BJ (cell line): ENCODE measurements at regions of chr6 and their contacts with region 1.

Region 1: DNA sequence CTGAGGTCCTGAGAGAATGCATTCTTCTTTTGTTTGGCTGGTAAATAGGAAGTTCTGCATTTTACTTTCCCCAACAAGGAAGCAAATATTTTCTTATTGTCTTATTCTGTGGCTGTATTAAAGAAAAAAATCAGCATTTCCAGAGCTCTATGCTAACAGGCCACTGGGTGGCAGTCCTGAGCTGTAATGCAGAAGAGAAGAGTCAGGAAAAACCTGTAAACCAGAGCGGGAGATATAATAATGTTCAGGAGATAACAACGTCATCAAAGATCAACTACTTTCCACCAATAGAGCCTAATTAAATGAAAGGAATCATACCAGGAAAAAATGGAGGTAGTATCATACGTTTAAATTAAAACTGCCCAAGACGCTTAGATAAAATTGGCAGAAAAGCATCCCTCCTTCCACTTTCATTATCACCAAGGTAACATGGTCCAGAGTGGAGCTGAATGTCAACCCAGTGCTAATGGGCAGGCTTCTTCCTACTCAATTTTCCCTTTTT is 55.6 kb upstream of the CARMIL1 start:
- DNase-seq: no peak
- H3K4me3 ChIP-seq: peak overlapping the region; percentile 22
- H3K27me3 ChIP-seq: no peaks in the 10 kb centered on the region
- CTCF ChIP-seq: peak; percentile 83

Region 2: DNA sequence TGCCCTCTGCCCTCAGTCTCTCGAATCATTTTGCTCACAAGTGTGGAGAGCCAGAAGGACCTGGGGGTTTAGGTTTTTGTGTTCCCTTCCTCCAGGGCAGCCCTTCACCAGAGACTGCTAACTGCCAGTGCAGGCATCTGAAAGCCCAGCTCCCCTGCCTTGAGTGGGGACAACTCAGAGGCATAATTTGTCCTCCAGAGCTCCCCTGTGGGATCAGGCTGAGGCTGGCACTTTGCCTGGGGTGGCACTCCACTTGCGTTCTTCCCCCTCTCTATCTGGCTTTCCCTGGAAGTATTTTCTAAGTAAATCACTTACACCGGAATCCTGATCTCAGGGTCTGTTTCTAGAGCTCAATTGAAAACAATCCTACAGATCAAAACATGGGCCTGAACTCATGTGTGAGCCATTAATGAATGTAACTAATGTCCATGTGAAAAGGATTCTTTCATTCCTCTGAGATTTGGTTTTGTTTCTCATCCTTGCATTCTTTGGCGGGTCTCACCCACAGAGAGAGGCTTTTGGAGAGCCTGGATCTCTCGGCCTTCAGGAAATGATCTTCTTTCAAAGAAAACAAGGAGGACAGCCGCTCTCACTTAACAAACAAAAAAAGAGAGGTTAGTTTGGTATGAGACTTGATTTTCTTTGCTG is 162.1 kb before region 1 on chr6:
- CTCF ChIA-PET with region 1: no interaction called
- POLR2A ChIA-PET with region 1: no interaction called
- DNase-seq: peak; percentile 27
- H3K4me3 ChIP-seq: no peak overlapping the region
- H3K27me3 ChIP-seq: no peaks in the 10 kb centered on the region
- CTCF ChIP-seq: no peak

Region 3: DNA sequence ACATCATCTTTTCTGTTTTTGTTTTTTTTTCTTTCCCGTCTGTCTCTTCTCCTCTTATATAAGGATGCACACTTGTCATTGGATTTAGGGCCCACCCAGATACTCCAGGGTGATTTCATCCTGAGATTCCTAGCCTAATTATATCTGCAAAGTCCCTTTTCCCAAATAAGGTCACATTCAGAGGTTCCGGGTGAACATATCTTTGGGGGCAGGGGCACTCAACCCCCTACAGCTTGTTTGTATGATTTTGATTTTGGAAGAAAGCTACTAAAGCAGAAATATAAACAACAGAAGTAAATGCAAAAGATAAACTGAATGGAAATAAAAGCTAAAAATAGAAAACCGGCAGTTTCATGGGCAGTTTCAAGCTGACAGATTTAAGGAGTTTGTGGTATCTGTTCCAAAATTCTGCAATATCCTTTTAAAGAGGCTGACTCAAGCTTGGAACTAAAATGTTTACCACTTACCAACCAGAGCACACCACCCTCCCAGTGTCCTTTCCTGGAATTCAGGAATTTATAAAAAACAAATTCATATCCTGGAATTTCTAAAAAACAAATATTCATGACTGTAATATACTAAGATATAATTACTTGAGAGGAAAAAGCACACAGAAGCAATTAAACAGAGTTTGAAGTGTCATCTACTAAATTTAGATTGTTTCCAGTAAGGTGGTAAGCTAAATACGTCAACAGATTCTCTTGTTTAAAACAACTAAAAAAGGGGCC is 44.3 kb before region 1 on chr6:
- CTCF ChIA-PET with region 1: interaction called, 13 read pairs
- POLR2A ChIA-PET with region 1: no interaction called
- DNase-seq: peak; percentile 75
- H3K4me3 ChIP-seq: no peak overlapping the region
- H3K27me3 ChIP-seq: no peaks in the 10 kb centered on the region
- CTCF ChIP-seq: no peak

Region 4: DNA sequence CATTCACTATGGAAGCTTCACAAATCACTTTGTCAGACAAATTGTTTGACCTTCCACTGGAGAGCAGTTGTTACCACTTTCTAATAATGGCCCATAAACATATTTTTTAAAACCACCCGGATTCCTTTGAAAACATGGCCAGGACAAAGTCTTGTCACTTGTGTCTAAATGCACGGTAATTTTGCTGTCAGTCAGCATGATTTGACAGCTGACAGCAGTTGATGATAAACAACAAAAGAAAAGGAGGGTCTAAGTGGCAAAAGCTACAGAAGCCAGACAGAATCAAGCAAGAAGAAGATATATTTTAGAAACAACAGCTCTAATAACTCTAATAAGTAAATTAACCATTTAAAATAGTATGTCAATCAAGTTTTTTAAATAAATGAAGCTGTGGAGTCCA is 27.9 kb after region 1 on chr6:
- CTCF ChIA-PET with region 1: no interaction called
- POLR2A ChIA-PET with region 1: no interaction called
- DNase-seq: no peak
- H3K4me3 ChIP-seq: no peak overlapping the region
- H3K27me3 ChIP-seq: no peaks in the 10 kb centered on the region
- CTCF ChIP-seq: no peak

Region 5: DNA sequence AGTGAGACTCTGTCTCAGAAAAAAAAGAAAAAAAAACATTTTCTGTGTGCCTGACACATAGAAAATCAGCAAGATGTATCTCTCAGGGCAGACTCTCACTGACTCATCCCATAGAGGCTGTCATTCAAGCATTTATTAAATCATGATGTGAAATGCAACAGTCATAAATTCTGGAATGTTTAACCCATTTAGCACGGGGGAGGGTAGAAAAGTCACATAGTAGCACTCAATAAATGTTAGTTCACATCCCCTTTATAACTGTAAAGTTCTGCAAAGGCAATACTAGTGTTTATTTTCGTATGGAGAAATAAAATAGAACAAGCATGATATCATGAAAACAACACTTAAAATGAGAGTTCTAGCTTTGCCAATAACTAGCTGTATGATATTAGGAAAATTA is 40.1 kb after region 1 on chr6:
- CTCF ChIA-PET with region 1: interaction called, 21 read pairs
- POLR2A ChIA-PET with region 1: interaction called, 5 read pairs
- DNase-seq: peak; percentile 96
- H3K4me3 ChIP-seq: no peak overlapping the region
- H3K27me3 ChIP-seq: no peaks in the 10 kb centered on the region
- CTCF ChIP-seq: no peak

Region 6: DNA sequence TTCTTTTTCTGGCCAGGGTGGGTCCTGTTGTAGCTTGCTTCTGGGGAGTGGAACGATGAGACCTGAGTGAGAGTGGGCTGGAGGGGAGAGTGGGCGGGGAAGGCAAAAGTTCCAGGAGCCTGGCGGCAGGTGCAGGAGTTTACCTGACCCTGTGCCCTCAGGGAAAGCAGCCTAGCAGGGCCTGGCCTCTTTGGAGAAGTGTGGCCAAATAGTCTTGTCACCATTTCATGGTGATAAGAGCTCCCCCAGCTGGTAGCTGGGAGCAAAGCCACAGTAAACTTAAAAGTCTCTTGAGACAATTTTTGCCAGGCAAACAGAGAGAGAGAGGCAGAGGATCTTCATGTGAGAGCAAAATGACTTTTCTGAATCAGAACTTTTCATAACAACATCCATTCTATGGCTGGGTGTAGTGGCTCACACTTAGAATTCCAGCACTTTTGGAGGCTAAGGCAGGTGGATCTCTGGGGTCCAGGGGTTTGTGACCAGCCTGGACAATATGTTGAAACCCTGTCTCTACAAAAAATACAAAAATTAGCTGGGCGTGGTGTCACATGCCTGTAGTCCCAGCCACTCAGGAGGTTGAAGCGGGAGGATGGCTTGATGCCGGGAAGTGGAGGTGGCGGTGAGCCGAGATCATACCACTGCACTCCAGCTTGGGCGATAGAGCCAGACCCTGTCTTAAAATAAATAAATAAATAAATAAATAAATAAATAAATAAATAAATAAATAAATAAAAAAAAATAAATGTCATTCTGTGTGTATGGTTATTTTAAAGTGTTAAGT is 266.7 kb after region 1 on chr6:
- CTCF ChIA-PET with region 1: interaction called, 16 read pairs
- POLR2A ChIA-PET with region 1: no interaction called
- DNase-seq: peak; percentile 29
- H3K4me3 ChIP-seq: no peak overlapping the region
- H3K27me3 ChIP-seq: no peaks in the 10 kb centered on the region
- CTCF ChIP-seq: peak; percentile 92

Region 7: DNA sequence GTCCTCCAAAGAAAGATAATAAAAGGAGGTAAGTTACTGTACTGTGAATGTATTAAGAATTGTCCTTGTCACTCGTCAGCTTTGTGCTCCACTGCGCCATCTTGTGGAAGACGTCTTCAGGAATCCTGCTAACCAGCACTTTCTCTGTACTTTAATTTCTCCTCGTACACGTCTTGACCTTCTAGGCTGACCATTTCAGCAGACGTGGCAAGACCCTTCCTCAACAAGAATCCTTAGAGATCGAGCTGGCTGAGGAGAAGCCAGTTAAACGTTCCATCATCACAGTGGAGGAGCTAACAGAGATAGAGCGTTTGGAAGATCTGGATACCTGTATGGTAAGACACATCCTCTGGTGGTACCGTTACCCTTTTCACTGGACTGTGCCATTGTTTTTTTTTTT is 333.0 kb after region 1 on chr6:
- CTCF ChIA-PET with region 1: interaction called, 18 read pairs
- POLR2A ChIA-PET with region 1: no interaction called
- DNase-seq: peak; percentile 6
- H3K4me3 ChIP-seq: no peak overlapping the region
- H3K27me3 ChIP-seq: no peaks in the 10 kb centered on the region
- CTCF ChIP-seq: peak; percentile 84

Region 8: GRCh38 chr6:25601800-25602673 is 378.5 kb after region 1 on chr6:
- CTCF ChIA-PET with region 1: interaction called, 11 read pairs
- POLR2A ChIA-PET with region 1: no interaction called
- DNase-seq: peak; percentile 16
- H3K4me3 ChIP-seq: no peak overlapping the region
- H3K27me3 ChIP-seq: no peaks in the 10 kb centered on the region
- CTCF ChIP-seq: peak; percentile 42

Region 9: DNA sequence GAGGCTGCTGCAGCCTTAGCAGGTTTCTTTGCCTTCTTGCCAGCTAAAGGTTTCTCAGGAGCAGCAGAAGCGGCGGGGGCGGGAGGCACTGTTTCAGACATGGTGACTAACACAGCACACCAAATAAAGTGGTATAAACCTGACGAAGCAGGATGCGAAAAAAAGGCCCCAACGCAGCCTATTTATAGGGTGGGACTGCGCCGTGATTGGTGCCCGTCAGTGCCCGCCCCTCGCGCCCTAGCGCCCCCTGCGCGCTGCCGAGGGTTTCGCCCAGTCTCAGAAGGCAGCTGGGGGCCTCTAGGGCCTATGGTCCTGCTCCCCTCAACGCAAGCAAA is 794.1 kb after region 1 on chr6:
- CTCF ChIA-PET with region 1: interaction called, 3 read pairs
- POLR2A ChIA-PET with region 1: interaction called, 10 read pairs
- DNase-seq: no peak
- H3K4me3 ChIP-seq: peak overlapping the region; percentile 26
- H3K27me3 ChIP-seq: no peaks in the 10 kb centered on the region
- CTCF ChIP-seq: peak; percentile 79